Psoas muscle (tissue), 8 donors: ENCODE measurements at regions of chr3 and their contacts with region 1.

Region 1: DNA sequence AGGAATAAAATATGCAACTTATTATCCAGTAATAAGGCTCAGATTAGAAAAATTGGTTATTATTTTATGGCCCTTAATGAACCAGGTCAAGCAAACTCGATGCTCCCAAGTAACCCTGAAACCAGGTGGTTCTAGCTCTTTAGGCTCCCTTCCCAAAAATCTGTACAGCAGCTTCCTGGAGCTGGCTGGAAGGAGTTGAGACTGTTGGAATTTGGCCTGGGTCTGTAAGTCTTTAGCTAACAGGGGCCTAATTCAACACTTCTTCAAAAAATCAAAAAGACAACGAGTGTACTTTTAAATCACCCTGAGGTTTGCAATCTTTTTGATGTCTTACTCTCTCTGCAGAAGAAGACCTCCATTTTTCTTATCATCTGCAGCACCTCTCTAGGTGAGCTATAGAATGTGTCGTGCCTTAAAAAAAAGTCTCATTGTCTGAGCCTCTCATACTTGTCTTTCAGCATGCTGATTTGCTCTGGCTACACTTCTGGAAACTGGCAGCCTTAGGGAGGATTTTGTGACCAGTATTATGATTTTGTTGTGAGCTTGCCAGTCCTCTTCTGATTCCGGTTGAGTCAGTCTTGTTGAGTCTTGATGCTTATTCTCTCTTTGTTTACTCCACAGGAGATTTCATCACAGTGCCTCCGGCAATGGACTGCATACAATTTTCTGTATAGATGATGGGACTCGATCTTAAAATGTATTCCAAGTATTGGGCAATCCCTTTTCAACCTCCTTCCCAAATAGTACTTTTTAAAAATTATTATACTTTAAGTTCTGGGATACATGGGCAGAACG is 235.0 kb upstream of the KBTBD8 start:
- DNase-seq: no peak
- ATAC-seq: peak; percentile 84 to 90 (median 88)
- H3K4me3 ChIP-seq: no peak overlapping the region
- H3K27ac ChIP-seq: peak overlapping the region; percentile 83
- H3K4me1 ChIP-seq: peaks cover 14% of the 10 kb centered on the region
- H3K27me3 ChIP-seq: no peaks in the 10 kb centered on the region
- CTCF ChIP-seq: no peak

Region 2: GRCh38 chr3:66407611-66408218 is 355.4 kb before region 1 on chr3:
- intact Hi-C with region 1: loop called in 1 of 2 experiments (anchors 5 kb)
- DNase-seq: peak; percentile 78 to 88
- ATAC-seq: peak; percentile 72 to 74 (median 73)
- H3K4me3 ChIP-seq: no peak overlapping the region
- H3K27ac ChIP-seq: peak overlapping the region; percentile 72
- H3K4me1 ChIP-seq: peaks cover 60% of the 10 kb centered on the region
- H3K27me3 ChIP-seq: no peaks in the 10 kb centered on the region
- CTCF ChIP-seq: peak; percentile 93

Region 3: DNA sequence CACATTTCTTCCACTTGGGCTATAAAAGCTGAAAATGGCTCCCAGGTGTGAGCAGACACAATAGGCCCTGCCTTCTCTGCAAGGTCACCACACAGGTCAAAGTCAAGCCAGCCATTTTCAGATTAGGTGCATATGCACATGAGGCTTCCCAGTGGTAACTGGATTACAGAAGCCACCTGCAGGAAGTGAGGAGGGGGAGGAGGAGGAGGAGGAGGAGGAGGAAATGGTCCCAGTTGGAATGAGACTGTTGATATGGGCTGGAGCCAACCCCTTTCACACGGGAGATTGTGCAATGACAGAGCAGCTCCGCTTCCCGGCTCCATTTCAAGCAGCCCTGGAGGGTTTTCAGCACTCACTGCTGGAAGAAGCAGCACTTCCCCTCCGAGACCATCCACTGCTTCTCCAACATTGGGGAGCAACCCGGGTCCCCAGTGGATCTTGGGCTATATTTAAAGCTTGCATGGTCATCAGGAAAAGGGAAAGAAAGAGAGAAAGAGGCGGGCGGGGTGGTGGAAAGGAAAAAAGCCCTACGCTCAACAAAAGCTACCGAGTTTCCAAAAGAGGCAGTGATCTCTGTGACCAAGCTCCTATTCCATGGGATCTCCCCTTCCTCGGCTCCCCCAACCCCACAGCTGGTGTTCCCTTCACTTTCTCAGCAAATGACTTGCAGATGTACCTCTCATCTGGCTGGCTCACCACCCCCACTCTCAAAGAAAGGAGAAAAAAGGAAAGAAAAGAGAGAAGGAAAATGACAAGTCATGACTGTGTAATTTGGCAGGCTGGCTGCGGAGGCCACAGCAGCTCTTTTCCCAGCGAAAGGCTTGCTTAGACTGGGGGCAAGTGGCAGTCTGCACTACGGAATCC is 320.6 kb before region 1 on chr3:
- intact Hi-C with region 1: no loop called
- DNase-seq: peak; percentile 71 to 86
- ATAC-seq: peak; percentile 84 to 93 (median 86)
- H3K4me3 ChIP-seq: peak overlapping the region; percentile 35
- H3K27ac ChIP-seq: peak overlapping the region; percentile 91
- H3K4me1 ChIP-seq: peaks cover 61% of the 10 kb centered on the region
- H3K27me3 ChIP-seq: no peaks in the 10 kb centered on the region
- CTCF ChIP-seq: no peak

Region 4: DNA sequence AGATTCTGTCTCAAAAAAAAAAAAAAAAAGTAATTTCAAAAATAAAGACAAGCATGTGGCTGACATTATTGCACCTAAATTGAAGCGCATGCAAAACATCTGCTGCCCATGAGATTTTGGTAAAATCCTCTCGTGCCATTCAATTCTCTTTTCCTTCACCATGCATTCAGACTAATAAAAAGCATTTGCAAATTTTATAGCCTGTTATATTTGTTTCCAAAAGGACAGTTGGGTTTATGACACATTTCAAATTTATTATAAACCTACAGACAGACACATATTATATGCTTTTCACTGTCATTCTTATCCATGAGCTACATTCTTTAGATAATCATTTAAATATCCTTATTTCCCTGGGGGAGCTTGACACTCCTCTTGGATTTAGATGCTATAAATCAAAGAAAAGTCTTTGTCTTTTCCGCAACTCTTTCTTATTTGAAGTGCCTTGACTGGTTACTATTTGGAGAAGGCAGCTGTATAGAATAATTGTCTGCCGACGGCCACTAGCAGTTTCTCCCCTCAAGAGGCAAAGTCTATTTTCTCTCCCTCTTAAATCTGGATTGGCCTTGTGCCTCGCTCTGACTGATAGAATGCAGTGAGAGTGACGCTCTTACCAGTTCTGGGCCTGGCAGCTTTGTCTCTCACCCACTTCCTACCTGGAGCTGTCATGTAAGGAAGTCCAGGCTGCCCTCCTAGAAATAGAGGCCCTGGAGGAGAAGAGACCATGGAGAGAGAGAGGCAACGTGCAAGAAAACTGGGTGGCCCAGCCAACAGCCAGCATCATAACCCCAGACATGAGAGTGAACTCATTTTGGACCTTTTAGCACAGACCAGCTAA is 255.5 kb before region 1 on chr3:
- intact Hi-C with region 1: loop called in 1 of 2 experiments (anchors 5 kb)
- DNase-seq: no peak
- ATAC-seq: no peak
- H3K4me3 ChIP-seq: no peak overlapping the region
- H3K27ac ChIP-seq: no peak overlapping the region
- H3K4me1 ChIP-seq: peaks cover 2% of the 10 kb centered on the region
- H3K27me3 ChIP-seq: no peaks in the 10 kb centered on the region
- CTCF ChIP-seq: no peak

Region 5: GRCh38 chr3:66615643-66616301 is 147.3 kb before region 1 on chr3:
- intact Hi-C with region 1: no loop called
- DNase-seq: no peak
- ATAC-seq: peak in 3 of 4 donors; percentile 38 to 80 (median 69)
- H3K4me3 ChIP-seq: no peak overlapping the region
- H3K27ac ChIP-seq: no peak overlapping the region
- H3K4me1 ChIP-seq: no peaks in the 10 kb centered on the region
- H3K27me3 ChIP-seq: no peaks in the 10 kb centered on the region
- CTCF ChIP-seq: no peak

Region 6: DNA sequence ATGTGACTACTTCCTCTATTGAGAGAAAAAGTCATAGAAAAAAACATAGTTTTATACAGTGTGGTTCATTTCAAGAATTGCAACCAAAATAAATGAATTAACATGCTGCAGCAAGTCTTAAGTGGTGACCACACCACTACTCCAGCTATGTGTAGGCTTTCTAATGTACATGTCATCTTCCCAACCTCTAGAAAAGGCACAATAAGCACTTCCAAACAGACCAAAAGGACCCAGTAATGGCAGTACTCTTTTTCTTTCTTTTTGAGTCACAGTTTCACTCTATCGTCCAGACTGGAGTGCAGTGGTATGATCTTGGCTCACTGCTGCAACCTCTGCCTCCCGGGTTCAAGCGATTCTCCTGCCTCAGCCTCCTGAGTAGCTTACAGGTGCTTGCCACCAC is 15.7 kb after region 1 on chr3:
- intact Hi-C with region 1: no loop called
- DNase-seq: no peak
- ATAC-seq: no peak
- H3K4me3 ChIP-seq: no peak overlapping the region
- H3K27ac ChIP-seq: no peak overlapping the region
- H3K4me1 ChIP-seq: no peaks in the 10 kb centered on the region
- H3K27me3 ChIP-seq: no peaks in the 10 kb centered on the region
- CTCF ChIP-seq: no peak

Region 7: DNA sequence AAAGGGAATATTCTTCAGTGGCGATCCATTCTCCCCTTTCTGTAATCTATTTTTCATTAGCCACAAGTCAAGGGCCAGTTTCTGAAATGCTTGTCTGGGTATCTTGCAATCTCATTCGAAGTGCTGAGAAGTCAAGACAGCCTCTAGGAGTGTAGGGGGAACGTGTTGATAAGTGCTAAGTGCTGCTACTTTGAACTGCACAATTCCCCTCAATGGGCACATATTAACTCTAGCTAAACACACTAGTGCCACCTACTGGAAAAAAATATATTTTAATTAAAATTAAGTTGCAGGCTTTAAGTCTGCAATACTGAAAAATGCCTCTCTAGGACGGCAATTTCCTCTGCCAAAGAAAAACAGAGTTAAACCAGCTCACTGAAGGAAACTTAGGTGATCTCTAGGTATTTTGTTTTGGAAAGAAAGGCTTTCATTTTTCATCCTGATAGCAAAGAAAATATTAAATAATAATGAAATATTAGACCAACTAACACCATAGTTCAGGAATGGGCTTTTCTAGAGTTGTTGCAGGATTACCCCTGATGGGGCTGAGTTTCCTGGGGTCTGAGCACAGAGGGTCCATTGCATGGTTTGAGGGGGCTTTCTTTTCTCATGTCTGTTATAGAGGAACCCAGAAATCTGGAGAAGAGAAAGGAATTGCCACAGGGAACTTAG is 53.1 kb after region 1 on chr3:
- intact Hi-C with region 1: loop called in 1 of 2 experiments (anchors 5 kb)
- DNase-seq: no peak
- ATAC-seq: peak; percentile 84 to 95 (median 89)
- H3K4me3 ChIP-seq: no peak overlapping the region
- H3K27ac ChIP-seq: no peak overlapping the region
- H3K4me1 ChIP-seq: no peaks in the 10 kb centered on the region
- H3K27me3 ChIP-seq: no peaks in the 10 kb centered on the region
- CTCF ChIP-seq: peak; percentile 72